Calu3 (cell line): ENCODE measurements at regions of chr2 and their contacts with region 1.

Region 1: GRCh38 chr2:195937176-195937575 is 131.5 kb downstream of the DNAH7 start:
- DNase-seq: no peak
- H3K4me3 Mint-ChIP-seq: no peak overlapping the region
- H3K27ac Mint-ChIP-seq: no peak overlapping the region
- H3K4me1 Mint-ChIP-seq: no peaks in the 10 kb centered on the region
- H3K27me3 Mint-ChIP-seq: no peaks in the 10 kb centered on the region
- CTCF ChIP-seq: no peak

Region 2: DNA sequence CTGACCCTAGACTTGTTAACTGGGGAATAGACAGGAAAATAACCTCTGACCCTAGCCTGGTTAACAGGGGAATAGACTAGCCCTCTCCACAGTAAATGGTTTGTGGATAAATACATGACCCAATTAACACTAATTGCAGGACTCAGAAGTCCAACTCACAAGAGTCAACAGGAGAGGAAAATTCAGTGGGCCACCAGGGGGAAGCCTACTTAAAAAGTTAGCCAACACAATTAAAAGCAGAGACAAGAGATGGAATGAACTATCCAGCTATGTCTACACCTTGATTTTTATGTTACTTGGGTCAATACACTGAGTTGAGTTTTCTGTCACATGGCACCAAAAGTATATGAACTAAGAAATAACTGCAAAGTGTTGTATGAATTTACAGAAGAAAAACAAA is 439.0 kb before region 1 on chr2:
- CTCF ChIA-PET with region 1: no interaction called
- intact Hi-C with region 1: loop called (anchors 2 kb)
- DNase-seq: peak; percentile 57
- H3K4me3 Mint-ChIP-seq: no peak overlapping the region
- H3K27ac Mint-ChIP-seq: no peak overlapping the region
- H3K4me1 Mint-ChIP-seq: peaks cover 8% of the 10 kb centered on the region
- H3K27me3 Mint-ChIP-seq: no peaks in the 10 kb centered on the region
- CTCF ChIP-seq: peak; percentile 34

Region 3: GRCh38 chr2:195664528-195664927 is 272.6 kb before region 1 on chr2:
- CTCF ChIA-PET with region 1: interaction called, 3 read pairs
- intact Hi-C with region 1: loop called (anchors 1 kb)
- DNase-seq: no peak
- H3K4me3 Mint-ChIP-seq: no peak overlapping the region
- H3K27ac Mint-ChIP-seq: no peak overlapping the region
- H3K4me1 Mint-ChIP-seq: peaks cover 12% of the 10 kb centered on the region
- H3K27me3 Mint-ChIP-seq: no peaks in the 10 kb centered on the region
- CTCF ChIP-seq: peak; percentile 9

Region 4: GRCh38 chr2:195793881-195794280 is 143.3 kb before region 1 on chr2:
- CTCF ChIA-PET with region 1: no interaction called
- intact Hi-C with region 1: no loop called
- DNase-seq: no peak
- H3K4me3 Mint-ChIP-seq: no peak overlapping the region
- H3K27ac Mint-ChIP-seq: no peak overlapping the region
- H3K4me1 Mint-ChIP-seq: peaks cover 9% of the 10 kb centered on the region
- H3K27me3 Mint-ChIP-seq: no peaks in the 10 kb centered on the region
- CTCF ChIP-seq: no peak